Mucosa of descending colon (tissue), 3 donors: ENCODE measurements at regions of chr11 and their contacts with region 1.

Region 1: DNA sequence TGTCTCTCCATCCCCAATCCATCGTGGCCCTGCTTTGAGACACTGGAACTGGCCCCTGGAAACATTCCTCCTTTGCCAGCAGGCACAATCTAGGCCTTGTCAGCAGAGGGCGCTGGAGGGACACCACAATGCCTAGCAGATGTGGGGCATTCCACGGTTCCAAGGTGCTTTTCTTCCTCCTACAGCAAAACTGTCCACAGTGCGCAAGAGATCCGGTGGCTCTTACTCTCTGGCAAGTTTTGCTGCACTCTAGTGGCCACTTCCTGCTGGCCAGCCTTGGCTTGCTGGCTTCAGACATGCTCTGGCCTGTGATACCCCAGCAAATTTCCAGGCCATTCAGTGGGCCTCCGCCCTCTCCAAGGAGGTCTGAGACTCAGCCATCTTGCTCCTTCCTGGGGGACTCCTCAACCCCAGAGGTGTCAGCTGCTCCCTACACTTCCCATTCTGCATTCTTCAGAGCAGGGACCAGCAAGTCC is 17.1 kb upstream of the RBM4B start:
- DNase-seq: peak; percentile 83 to 96 (median 92)
- ATAC-seq: peak; percentile 98
- H3K4me3 ChIP-seq: no peak overlapping the region
- H3K4me1 ChIP-seq: no peaks in the 10 kb centered on the region
- CTCF ChIP-seq: peak; percentile 86

Region 2: GRCh38 chr11:66835768-66836405 is 141.1 kb after region 1 on chr11:
- intact Hi-C with region 1: loop called (anchors 2 to 5 kb)
- DNase-seq: no peak
- ATAC-seq: no peak
- H3K4me3 ChIP-seq: no peak overlapping the region
- H3K4me1 ChIP-seq: no peaks in the 10 kb centered on the region
- CTCF ChIP-seq: no peak